SK-N-SH (cell line): ENCODE measurements at regions of chr14 and their contacts with region 1.

Region 1: GRCh38 chr14:86654558-86655184 is 1124.7 kb downstream of the FLRT2 start:
- DNase-seq: peak; percentile 19
- H3K4me3 ChIP-seq: peak overlapping the region; percentile 12 to 48; a peak in 2 of 4 replicates
- H3K27ac ChIP-seq: no peak overlapping the region
- H3K4me1 ChIP-seq: peaks cover 0 to 4% of the 10 kb centered on the region in 2 experiments; a peak in 1 of 4 replicates
- H3K27me3 ChIP-seq: no peaks in the 10 kb centered on the region
- CTCF ChIP-seq: peak; percentile 90
- EP300 ChIP-seq: no peak
- RAD21 ChIP-seq: peak; percentile 74

Region 2: GRCh38 chr14:86462193-86462753 is 192.4 kb before region 1 on chr14:
- CTCF ChIA-PET with region 1: interaction called, 11 read pairs
- POLR2A ChIA-PET with region 1: no interaction called
- DNase-seq: no peak
- H3K4me3 ChIP-seq: no peak overlapping the region
- H3K27ac ChIP-seq: no peak overlapping the region
- H3K4me1 ChIP-seq: no peaks in the 10 kb centered on the region
- H3K27me3 ChIP-seq: no peaks in the 10 kb centered on the region
- CTCF ChIP-seq: peak; percentile 61
- EP300 ChIP-seq: no peak
- RAD21 ChIP-seq: peak; percentile 47

Region 3: GRCh38 chr14:86673523-86673969 is 18.9 kb after region 1 on chr14:
- CTCF ChIA-PET with region 1: interaction called, 11 read pairs
- POLR2A ChIA-PET with region 1: no interaction called
- DNase-seq: no peak
- H3K4me3 ChIP-seq: no peak overlapping the region
- H3K27ac ChIP-seq: no peak overlapping the region
- H3K4me1 ChIP-seq: no peaks in the 10 kb centered on the region
- H3K27me3 ChIP-seq: no peaks in the 10 kb centered on the region
- CTCF ChIP-seq: no peak
- EP300 ChIP-seq: no peak
- RAD21 ChIP-seq: no peak